ENCODE measurements at regions of chr5 and their contacts with region 1.

Region 1: GRCh38 chr5:157471709-157472108 is 11.7 kb downstream of the NIPAL4 start:
- DNase-seq: peak; percentile 57
- H3K4me3 Mint-ChIP-seq: no peak overlapping the region
- H3K27ac Mint-ChIP-seq: no peak overlapping the region
- H3K4me1 Mint-ChIP-seq: no peaks in the 10 kb centered on the region
- H3K27me3 Mint-ChIP-seq: no peaks in the 10 kb centered on the region
- CTCF ChIP-seq: peak; percentile 81

Region 2: GRCh38 chr5:157342822-157343402 is 128.8 kb before region 1 on chr5:
- CTCF ChIA-PET with region 1: interaction called, 10 read pairs
- intact Hi-C with region 1: no loop called
- DNase-seq: peak; percentile 70
- H3K4me3 Mint-ChIP-seq: no peak overlapping the region
- H3K27ac Mint-ChIP-seq: no peak overlapping the region
- H3K4me1 Mint-ChIP-seq: no peaks in the 10 kb centered on the region
- H3K27me3 Mint-ChIP-seq: no peaks in the 10 kb centered on the region
- CTCF ChIP-seq: peak; percentile 68

Region 3: DNA sequence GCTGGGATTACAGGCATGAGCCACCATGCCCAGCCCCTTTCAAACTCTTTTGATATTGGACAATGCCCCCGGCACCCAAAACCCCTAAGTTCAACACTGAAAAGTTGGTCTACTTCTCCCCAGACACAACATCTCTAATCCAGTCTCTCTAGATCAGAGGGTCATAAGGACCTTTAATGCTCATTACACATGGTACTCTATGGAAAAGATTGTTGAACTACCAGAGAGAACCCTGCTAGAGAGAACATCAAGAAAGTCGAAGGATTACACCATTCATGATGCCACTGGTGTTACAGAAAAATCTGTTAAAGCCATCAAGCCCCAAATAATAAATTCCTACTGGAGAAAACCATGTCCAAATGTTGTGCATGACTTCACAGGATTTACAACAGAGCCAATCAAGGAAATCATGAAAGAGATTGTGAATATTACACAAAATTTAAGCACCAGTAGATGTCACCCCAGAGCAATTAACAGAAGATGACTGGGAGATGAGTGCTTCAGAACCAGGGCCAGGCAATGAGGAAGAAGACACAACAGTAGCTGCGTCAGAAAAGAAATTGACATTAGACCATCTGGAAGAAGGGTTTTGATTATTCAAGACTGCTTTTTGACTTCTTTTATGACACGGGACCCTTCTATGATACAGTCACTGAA is 40.0 kb before region 1 on chr5:
- CTCF ChIA-PET with region 1: interaction called, 10 read pairs
- intact Hi-C with region 1: loop called (anchors 1 kb)
- DNase-seq: peak; percentile 52
- H3K4me3 Mint-ChIP-seq: no peak overlapping the region
- H3K27ac Mint-ChIP-seq: no peak overlapping the region
- H3K4me1 Mint-ChIP-seq: no peaks in the 10 kb centered on the region
- H3K27me3 Mint-ChIP-seq: peaks cover 3% of the 10 kb centered on the region
- CTCF ChIP-seq: peak; percentile 48

Region 4: DNA sequence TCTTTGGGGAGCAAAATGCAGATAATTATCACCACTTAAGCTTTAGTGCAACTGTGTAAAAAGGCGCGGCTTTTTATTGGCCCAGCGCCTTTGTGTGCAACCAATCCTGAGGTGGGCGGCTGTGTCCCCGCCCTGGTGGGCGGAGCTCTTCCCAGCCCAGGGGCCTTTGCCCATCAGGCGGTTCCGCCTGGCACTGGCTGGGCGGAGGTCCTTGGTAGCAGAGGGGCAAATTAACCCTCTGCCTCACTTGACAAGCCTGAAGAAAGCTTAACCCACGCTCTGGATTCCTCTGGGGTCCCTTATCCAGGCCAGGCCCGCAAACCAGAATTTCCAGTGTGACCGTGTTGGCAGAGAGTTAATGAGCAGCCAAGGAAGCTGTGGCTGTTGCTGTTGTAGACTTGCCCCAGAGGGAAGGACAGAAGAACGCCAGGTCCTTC is 24.5 kb before region 1 on chr5:
- CTCF ChIA-PET with region 1: interaction called, 14 read pairs
- intact Hi-C with region 1: no loop called
- DNase-seq: peak; percentile 88
- H3K4me3 Mint-ChIP-seq: peak overlapping the region; percentile 70
- H3K27ac Mint-ChIP-seq: peak overlapping the region; percentile 36
- H3K4me1 Mint-ChIP-seq: peaks cover 52% of the 10 kb centered on the region
- H3K27me3 Mint-ChIP-seq: no peaks in the 10 kb centered on the region
- CTCF ChIP-seq: no peak